AG04449 (cell line): ENCODE measurements at regions of chr1 and their contacts with region 1.

Region 1: GRCh38 chr1:244296447-244296846 is 155.3 kb downstream of the ADSS2 start:
- DNase-seq: no peak
- H3K4me3 ChIP-seq: no peak overlapping the region
- CTCF ChIP-seq: no peak

Region 2: GRCh38 chr1:243343970-243344937 is 952.2 kb before region 1 on chr1:
- CTCF ChIA-PET with region 1: interaction called, 45 read pairs
- POLR2A ChIA-PET with region 1: no interaction called
- DNase-seq: no peak
- H3K4me3 ChIP-seq: no peak overlapping the region
- CTCF ChIP-seq: peak; percentile 30

Region 3: DNA sequence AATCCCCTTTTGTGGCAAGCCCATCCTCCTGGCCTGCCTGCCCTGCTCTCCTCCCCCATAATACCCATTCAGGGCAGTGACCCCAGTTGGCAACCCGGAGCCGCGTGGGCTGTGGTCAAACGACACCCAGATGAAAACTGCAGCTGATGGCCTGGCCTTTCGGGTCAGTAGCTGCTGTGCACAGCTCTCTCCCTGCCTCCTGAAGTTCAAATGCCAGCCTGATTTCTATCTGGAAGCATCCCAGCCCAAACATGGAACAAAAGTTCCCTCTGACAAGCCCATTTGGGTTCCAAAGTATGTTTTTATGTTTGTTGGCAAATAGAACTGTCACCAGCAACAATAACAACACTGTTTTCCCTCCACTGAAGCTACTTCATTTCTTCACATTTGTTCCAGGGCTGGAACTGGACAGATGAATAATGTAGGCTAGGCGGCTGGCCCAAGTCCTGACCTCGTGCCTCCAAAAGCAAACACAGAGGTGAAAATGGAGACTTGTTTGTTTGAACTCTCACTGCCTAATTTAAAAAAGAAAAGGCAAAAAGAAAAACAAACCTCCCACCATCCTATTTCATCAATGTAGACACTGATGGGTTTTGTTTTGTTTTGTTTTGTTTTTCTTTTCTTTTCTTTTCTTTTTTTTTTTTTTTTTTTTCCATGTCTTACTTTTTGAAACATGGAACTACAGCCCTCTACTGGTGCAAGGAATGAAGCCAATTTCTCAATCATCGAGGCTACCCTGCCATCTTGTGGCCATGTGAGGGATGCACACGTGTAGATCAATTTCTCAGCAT is 23.8 kb before region 1 on chr1:
- CTCF ChIA-PET with region 1: interaction called, 16 read pairs
- POLR2A ChIA-PET with region 1: no interaction called
- DNase-seq: peak; percentile 67
- H3K4me3 ChIP-seq: no peak overlapping the region
- CTCF ChIP-seq: peak; percentile 92

Region 4: DNA sequence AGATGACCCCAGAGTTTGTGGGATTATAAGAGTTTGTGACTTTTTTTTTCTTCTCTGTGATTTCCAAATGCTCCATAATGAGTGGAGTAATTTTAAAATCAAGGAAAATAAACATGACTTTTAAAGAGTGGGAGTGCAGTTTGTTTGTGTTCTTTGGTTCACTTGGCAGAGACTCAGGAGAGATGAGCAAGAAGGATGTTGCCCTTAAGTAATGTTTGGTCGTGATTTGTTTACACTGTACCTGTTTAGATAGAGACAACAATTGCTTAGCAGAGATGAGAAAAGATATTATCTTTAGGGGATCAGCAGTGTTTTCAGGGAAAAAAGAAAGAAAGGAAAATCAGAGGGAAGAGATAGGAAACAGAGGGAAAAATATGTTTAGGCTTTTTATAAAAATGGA is 15.6 kb before region 1 on chr1:
- CTCF ChIA-PET with region 1: interaction called, 72 read pairs
- POLR2A ChIA-PET with region 1: no interaction called
- DNase-seq: no peak
- H3K4me3 ChIP-seq: no peak overlapping the region
- CTCF ChIP-seq: no peak

Region 5: GRCh38 chr1:244311784-244312532 is 15.5 kb after region 1 on chr1:
- CTCF ChIA-PET with region 1: interaction called, 23 read pairs
- POLR2A ChIA-PET with region 1: no interaction called
- DNase-seq: no peak
- H3K4me3 ChIP-seq: no peak overlapping the region
- CTCF ChIP-seq: no peak